CD8-positive, alpha-beta T cell (primary cell): ENCODE measurements at regions of chr1 and their contacts with region 1.

Region 1: DNA sequence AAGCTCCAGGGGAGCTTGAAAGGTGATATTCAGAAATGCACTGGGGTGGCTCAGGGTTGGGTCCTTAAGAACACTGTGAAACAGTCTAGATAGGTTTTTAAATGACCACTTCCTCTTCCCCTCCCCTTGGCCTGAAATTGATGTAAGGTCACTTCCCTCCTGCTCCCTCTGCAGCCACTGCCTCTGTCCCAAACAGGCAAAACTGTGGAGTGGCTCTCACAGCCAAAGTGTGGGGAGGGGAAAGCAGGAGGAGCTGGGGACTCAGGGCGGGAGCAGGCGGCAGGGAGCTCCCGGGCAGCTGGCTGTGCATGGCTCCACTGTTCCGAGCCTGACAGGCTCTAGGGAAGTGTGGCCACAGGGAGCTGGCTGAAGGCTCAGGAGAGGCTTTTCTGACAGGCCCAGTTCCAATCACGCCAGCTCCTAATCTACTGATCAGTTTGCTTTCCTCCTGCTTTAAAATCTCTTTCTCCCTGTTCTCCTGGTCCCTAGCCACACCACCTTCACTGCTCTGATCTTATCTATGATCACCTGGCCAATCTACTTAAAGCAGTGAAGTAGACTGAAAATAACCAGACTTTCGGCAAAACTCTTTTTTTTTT is 5.1 kb upstream of the CSRP1 start:
- DNase-seq: no peak
- ATAC-seq: no peak
- H3K4me3 ChIP-seq: no peak overlapping the region
- H3K4me3 Mint-ChIP-seq: no peak overlapping the region
- H3K27ac ChIP-seq: no peak overlapping the region
- H3K27ac Mint-ChIP-seq: no peak overlapping the region
- H3K4me1 ChIP-seq: peaks cover 8% of the 10 kb centered on the region
- H3K4me1 Mint-ChIP-seq: peaks cover 17% of the 10 kb centered on the region
- H3K27me3 ChIP-seq: no peaks in the 10 kb centered on the region
- H3K27me3 Mint-ChIP-seq: no peaks in the 10 kb centered on the region
- CTCF ChIP-seq: no peak

Region 2: DNA sequence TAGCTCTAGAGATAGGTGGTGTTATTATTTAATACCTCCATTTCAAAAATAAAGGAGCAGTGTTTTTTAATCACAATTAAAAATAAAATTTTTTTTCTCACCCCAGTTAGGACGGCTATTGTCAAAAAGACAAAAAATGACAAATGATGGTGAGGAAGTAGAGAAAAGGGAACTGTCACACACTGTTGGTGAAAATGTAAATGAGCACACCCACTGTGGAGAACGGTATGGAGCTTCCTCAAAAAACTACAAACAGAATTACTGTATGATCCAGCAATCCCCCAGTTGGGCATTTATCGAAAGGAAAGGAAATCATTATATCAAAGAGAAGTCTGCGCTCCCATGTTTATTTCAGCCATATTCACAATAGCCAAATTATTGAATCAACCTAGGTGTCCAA is 1633.2 kb before region 1 on chr1:
- CTCF ChIA-PET with region 1: no interaction called
- POLR2A ChIA-PET with region 1: no interaction called
- intact Hi-C with region 1: no loop called
- DNase-seq: no peak
- ATAC-seq: no peak
- H3K4me3 ChIP-seq: no peak overlapping the region
- H3K4me3 Mint-ChIP-seq: no peak overlapping the region
- H3K27ac ChIP-seq: no peak overlapping the region
- H3K27ac Mint-ChIP-seq: no peak overlapping the region
- H3K4me1 ChIP-seq: no peaks in the 10 kb centered on the region
- H3K4me1 Mint-ChIP-seq: no peaks in the 10 kb centered on the region
- H3K27me3 ChIP-seq: no peaks in the 10 kb centered on the region
- H3K27me3 Mint-ChIP-seq: peaks cover 3% of the 10 kb centered on the region
- CTCF ChIP-seq: no peak

Region 3: GRCh38 chr1:201436393-201436792 is 75.6 kb before region 1 on chr1:
- CTCF ChIA-PET with region 1: interaction called, 13 read pairs
- POLR2A ChIA-PET with region 1: no interaction called
- intact Hi-C with region 1: no loop called
- DNase-seq: no peak
- ATAC-seq: no peak
- H3K4me3 ChIP-seq: no peak overlapping the region
- H3K4me3 Mint-ChIP-seq: no peak overlapping the region
- H3K27ac ChIP-seq: no peak overlapping the region
- H3K27ac Mint-ChIP-seq: no peak overlapping the region
- H3K4me1 ChIP-seq: no peaks in the 10 kb centered on the region
- H3K4me1 Mint-ChIP-seq: peaks cover 5% of the 10 kb centered on the region
- H3K27me3 ChIP-seq: no peaks in the 10 kb centered on the region
- H3K27me3 Mint-ChIP-seq: peaks cover 17% of the 10 kb centered on the region
- CTCF ChIP-seq: no peak

Region 4: GRCh38 chr1:201447911-201448871 is 63.8 kb before region 1 on chr1:
- CTCF ChIA-PET with region 1: interaction called, 37 read pairs
- POLR2A ChIA-PET with region 1: no interaction called
- intact Hi-C with region 1: loop called (anchors 1 kb)
- DNase-seq: peak; percentile 16 to 70 (median 53)
- ATAC-seq: peak; percentile 79
- H3K4me3 ChIP-seq: no peak overlapping the region
- H3K4me3 Mint-ChIP-seq: no peak overlapping the region
- H3K27ac ChIP-seq: no peak overlapping the region
- H3K27ac Mint-ChIP-seq: no peak overlapping the region
- H3K4me1 ChIP-seq: no peaks in the 10 kb centered on the region
- H3K4me1 Mint-ChIP-seq: no peaks in the 10 kb centered on the region
- H3K27me3 ChIP-seq: no peaks in the 10 kb centered on the region
- H3K27me3 Mint-ChIP-seq: peaks cover 7% of the 10 kb centered on the region
- CTCF ChIP-seq: peak; percentile 53

Region 5: DNA sequence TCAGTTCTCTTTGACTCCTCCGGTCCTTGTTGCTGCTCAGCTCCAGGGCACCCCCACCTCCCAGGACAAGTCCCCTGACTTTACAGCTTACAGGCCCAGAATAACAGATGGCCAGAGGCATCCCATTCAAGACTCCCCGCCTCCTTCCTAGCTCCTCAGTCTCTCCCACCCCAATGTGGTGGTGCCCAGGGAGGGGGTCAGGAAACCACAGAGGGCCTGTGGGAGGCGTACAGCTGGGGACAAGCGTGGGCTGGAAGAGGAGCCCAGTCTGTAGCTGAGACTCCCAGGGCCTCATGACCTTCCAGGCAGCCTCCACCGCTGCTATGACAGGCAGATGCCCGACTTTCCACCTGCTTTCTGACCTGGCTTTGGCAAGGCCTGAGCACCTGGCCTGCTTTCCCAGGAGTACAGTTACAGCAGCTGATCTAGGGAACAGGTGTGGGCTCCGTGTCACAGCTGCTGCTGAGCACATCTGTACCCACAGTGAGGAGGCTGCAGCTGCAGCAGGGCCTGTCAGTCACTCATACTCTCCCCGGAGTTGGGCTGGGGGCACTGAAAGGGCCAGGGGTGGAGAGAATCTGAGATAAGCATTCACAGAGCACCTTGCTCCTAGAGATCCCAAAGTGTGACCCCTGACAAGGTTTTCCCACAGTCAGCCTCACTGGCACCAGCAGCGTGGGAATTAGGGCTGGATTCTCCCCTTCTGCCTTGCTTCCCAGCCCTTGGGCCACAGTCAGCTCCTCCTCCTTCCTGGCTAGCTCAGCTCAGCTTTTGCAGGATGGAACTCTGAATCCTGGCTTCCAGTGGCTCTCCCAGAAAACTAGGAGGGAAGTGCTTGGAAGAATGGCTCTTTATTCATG is 19.7 kb after region 1 on chr1:
- CTCF ChIA-PET with region 1: interaction called, 18 read pairs
- POLR2A ChIA-PET with region 1: no interaction called
- intact Hi-C with region 1: no loop called
- DNase-seq: no peak
- ATAC-seq: no peak
- H3K4me3 ChIP-seq: no peak overlapping the region
- H3K4me3 Mint-ChIP-seq: no peak overlapping the region
- H3K27ac ChIP-seq: no peak overlapping the region
- H3K27ac Mint-ChIP-seq: no peak overlapping the region
- H3K4me1 ChIP-seq: no peaks in the 10 kb centered on the region
- H3K4me1 Mint-ChIP-seq: no peaks in the 10 kb centered on the region
- H3K27me3 ChIP-seq: no peaks in the 10 kb centered on the region
- H3K27me3 Mint-ChIP-seq: peaks cover 15% of the 10 kb centered on the region
- CTCF ChIP-seq: no peak

Region 6: DNA sequence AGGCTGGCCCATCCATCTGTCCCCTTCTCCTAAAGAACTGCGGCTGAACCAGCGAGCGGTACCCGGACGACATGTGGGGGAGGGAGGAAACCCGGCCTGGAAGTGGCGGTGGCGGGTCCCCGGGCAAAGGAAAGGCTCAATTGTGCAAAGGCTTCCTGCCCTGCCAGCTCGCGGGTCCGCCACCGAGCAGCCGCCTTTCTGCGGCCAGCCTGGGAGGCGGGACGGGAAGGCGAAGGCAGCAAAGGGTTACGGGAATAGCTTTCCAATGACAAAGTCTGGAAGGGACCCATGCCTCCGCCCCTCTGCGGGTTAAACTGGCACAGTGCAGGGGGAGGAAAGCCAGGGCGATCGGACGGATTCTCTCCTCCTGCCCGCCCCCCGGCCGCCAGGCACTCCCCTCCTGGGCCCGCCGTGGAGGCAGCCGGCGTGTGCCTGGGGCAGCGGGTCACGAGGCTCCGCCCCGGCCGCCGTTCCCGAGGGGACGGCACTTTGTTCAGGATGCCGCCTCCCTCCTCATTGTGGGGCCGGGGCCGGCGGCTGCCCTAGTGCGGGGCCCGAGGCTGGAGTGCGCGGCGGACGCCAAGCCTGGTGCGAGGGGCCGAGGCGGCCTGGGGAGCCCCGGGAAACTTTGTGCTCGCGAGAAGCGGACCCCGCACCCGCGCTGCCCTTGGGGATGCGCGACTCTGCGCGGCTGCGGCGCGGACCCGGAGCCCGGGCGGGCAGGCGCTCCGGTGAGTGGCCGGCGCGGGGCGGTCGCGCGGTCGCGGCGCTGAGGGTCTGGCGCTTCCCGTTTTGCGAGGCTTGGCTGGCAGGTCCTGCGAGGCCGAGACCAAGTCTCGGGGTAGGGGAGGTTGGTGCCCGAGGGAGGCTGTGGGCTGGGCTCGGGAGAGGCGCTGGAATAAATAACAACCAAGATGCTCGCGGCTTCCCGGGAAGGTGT is 26.8 kb after region 1 on chr1 and contains the start of gene NAV1:
- CTCF ChIA-PET with region 1: interaction called, 14 read pairs
- POLR2A ChIA-PET with region 1: no interaction called
- intact Hi-C with region 1: no loop called
- DNase-seq: no peak
- ATAC-seq: no peak
- H3K4me3 ChIP-seq: peak within 1 kb of the TSS in 1 of 2 experiments; percentile 43
- H3K4me3 Mint-ChIP-seq: peak within 1 kb of the TSS; percentile 78
- H3K27ac ChIP-seq: no peak within 1 kb of the TSS
- H3K27ac Mint-ChIP-seq: no peak within 1 kb of the TSS
- H3K4me1 ChIP-seq: peaks cover 16% of the 10 kb centered on the region
- H3K4me1 Mint-ChIP-seq: peaks cover 12% of the 10 kb centered on the region
- H3K27me3 ChIP-seq: peaks cover 12 to 26% of the 10 kb centered on the region in 2 experiments
- H3K27me3 Mint-ChIP-seq: peaks cover 57% of the 10 kb centered on the region
- CTCF ChIP-seq: no peak
- total RNA-seq, gene NAV1: 1.6 to 1.8 TPM

Region 7: DNA sequence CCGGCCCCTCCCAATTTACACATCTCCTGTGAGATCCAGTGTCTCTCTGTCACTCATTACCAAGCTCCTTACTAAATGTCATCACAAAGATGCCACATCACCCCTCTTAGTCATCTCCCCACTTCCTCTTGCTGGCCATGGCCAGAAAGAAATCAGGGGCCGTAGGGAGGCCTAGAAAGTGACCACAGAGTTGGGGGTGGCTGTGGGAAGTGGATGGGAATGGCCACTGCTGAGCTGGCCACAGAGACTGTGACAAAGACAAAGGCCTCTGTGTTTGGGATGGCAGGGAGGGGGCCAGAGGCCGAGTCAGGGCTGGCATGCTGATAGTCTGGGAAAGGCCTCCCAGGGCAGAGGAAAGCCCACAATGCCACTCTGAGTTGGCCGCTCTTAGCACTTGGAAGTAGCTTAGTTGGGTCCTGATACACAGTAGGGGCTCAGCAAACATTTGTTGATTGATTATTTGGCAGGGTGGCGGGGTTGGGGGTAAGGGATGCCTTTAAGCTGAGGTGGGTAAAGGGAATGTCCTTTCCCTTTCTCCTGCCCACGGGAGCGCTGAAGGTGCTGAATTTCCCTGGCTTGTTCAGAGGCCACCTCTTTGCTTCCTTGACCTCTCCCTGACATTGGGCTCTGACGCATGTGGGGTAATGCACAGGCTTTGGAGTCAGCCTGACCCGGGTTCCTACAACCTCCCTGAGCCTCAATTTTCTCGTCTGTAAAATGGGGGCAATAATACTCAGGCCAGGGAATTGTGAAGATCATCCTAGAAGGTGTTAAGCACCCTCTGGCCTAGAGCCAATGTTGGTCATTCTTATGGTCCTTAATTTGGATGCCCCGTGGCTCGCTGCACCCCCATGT is 40.1 kb after region 1 on chr1:
- CTCF ChIA-PET with region 1: interaction called, 10 read pairs
- POLR2A ChIA-PET with region 1: no interaction called
- intact Hi-C with region 1: no loop called
- DNase-seq: peak in 1 of 9 experiments; percentile 31
- ATAC-seq: no peak
- H3K4me3 ChIP-seq: no peak overlapping the region
- H3K4me3 Mint-ChIP-seq: no peak overlapping the region
- H3K27ac ChIP-seq: no peak overlapping the region
- H3K27ac Mint-ChIP-seq: no peak overlapping the region
- H3K4me1 ChIP-seq: no peaks in the 10 kb centered on the region
- H3K4me1 Mint-ChIP-seq: no peaks in the 10 kb centered on the region
- H3K27me3 ChIP-seq: no peaks in the 10 kb centered on the region
- H3K27me3 Mint-ChIP-seq: no peaks in the 10 kb centered on the region
- CTCF ChIP-seq: no peak

Region 8: DNA sequence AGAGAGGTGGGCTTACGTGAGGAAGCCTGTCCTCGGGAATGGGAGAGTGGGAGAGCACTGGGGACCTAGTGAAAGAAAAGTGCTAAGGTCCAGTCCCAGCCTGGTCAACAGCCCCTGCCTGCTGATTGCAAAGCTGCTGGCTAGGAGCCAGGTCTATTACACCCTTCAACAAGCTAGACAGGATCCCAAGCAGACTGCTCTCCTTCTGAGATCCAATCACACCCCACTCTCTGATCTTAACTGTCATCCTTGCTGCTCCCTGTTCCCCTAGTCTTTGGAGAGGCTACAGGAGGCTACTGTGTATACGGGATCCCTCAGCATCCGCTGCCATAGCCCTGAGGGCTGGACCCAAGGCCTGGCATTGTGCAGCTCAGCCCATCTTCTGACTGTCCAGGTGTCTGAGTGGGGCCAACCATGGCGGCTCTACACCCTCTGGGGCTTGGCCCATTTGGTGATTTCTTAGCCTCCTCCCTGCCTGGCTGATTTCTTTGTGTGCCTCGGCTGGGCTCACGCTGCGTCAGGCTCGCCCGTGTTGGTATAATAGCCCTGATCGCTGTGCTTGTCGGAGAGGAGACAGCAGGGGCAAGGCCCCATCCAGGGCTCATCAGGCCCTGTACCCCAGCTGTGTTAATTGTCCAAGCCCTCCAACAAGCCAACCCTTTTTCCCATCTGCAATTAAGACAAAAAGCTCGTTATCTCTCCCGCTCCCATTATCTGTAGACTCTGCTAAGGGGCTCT is 70.8 kb after region 1 on chr1:
- CTCF ChIA-PET with region 1: no interaction called
- POLR2A ChIA-PET with region 1: no interaction called
- intact Hi-C with region 1: no loop called
- DNase-seq: no peak
- ATAC-seq: no peak
- H3K4me3 ChIP-seq: no peak overlapping the region
- H3K4me3 Mint-ChIP-seq: no peak overlapping the region
- H3K27ac ChIP-seq: no peak overlapping the region
- H3K27ac Mint-ChIP-seq: no peak overlapping the region
- H3K4me1 ChIP-seq: no peaks in the 10 kb centered on the region
- H3K4me1 Mint-ChIP-seq: no peaks in the 10 kb centered on the region
- H3K27me3 ChIP-seq: no peaks in the 10 kb centered on the region
- H3K27me3 Mint-ChIP-seq: peaks cover 12% of the 10 kb centered on the region
- CTCF ChIP-seq: no peak

Region 9: GRCh38 chr1:202968840-202969295 is 1456.8 kb after region 1 on chr1:
- CTCF ChIA-PET with region 1: no interaction called
- POLR2A ChIA-PET with region 1: no interaction called
- intact Hi-C with region 1: no loop called
- DNase-seq: peak in 4 of 9 experiments; percentile 14 to 64 (median 40)
- ATAC-seq: peak; percentile 19
- H3K4me3 ChIP-seq: no peak overlapping the region
- H3K4me3 Mint-ChIP-seq: peak overlapping the region; percentile 49
- H3K27ac ChIP-seq: no peak overlapping the region
- H3K27ac Mint-ChIP-seq: no peak overlapping the region
- H3K4me1 ChIP-seq: peaks cover 24% of the 10 kb centered on the region
- H3K4me1 Mint-ChIP-seq: peaks cover 32% of the 10 kb centered on the region
- H3K27me3 ChIP-seq: no peaks in the 10 kb centered on the region
- H3K27me3 Mint-ChIP-seq: no peaks in the 10 kb centered on the region
- CTCF ChIP-seq: peak; percentile 28